ENCODE measurements at regions of chr3 and their contacts with region 1.

Region 1: DNA sequence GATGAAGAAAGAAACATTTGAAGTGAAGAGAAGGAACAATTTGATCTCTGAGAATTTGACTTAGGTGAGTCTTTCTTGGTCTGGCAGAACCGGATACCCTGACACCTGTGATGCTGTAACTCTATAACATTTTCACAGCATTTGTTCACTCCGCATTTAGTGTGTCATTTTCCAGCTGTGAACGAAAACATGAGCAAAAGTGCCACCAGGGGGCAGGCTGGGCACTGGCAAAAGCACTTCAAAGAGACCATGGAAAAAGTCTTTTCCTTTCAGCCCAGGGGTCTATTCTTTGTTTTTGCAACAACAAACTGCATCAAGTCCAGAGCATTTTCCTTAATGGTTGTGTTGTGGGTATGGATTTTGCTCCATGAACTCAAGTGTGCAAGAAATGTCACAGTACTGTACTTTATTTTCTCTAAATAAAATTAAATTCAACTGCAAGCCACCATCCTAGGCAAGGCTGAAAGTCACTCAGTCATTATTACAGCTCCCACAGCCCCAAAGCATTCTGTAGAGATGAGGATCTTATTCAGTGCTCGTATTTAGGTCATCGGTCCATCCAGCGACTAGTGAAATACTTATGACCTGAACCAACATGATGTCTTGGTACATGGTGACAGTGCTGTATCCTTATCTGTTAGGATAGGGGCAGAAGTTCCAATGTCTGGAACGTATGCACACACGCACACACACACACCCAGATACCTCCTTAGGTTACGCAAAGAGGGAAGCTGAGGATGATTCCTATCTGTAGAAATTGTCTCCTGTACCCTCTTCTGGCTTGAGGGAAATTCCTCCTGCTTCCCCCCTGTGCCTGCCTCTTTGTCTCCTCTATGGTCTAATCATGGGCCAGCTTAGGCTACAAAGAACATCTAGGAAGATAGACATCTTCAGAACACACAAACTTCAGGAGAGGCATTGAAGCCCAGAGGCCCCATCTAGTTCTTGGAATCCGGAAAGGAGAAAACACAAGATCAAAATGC is 125.5 kb downstream of the GADL1 start:
- DNase-seq: peak; percentile 39 to 69 (median 62)
- ATAC-seq: peak; percentile 48
- H3K4me3 ChIP-seq: no peak overlapping the region
- H3K4me3 Mint-ChIP-seq: peak overlapping the region in 1 of 10 donors; percentile 35
- H3K27ac ChIP-seq: no peak overlapping the region
- H3K27ac Mint-ChIP-seq: no peak overlapping the region
- H3K4me1 ChIP-seq: no peaks in the 10 kb centered on the region
- H3K4me1 Mint-ChIP-seq: peaks cover 0 to 7% (median 0%) of the 10 kb centered on the region in 7 donors
- H3K27me3 ChIP-seq: no peaks in the 10 kb centered on the region
- H3K27me3 Mint-ChIP-seq: peaks cover 0 to 32% (median 3%) of the 10 kb centered on the region in 5 donors

Region 2: DNA sequence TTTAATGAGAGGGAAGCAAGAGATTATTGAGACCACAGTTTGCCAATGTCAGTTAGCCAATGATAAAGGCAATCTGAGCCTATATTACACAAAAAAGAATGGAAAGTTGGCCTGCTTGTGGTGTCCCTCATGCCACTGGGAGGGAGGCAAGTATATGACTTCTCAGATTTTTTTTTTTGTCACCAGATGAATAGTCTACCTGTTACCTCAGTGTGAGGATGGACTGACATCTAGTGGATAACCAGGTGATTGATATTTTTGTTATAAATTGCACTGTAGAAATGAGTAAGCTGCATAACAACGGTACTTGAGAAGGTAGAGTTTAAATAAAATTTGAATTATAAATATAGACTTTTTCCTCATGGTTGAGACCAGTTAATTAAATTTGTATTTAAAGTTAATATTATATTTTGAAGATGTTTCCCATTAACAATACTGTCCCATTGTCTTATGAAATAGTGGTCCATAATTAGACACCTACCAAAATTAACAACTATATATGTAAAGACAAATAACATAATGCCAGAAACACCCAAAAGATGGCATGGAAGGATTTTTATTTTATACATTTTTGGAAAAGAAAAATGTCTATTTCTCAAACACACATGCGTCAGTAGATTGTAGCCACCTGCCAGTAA is 363.3 kb after region 1 on chr3:
- CTCF ChIA-PET with region 1: no interaction called
- POLR2A ChIA-PET with region 1: no interaction called
- intact Hi-C with region 1: loop called (anchors 1 kb)
- DNase-seq: peak in 6 of 9 donors; percentile 2 to 55 (median 39)
- ATAC-seq: peak; percentile 58
- H3K4me3 ChIP-seq: no peak overlapping the region
- H3K4me3 Mint-ChIP-seq: no peak overlapping the region
- H3K27ac ChIP-seq: no peak overlapping the region
- H3K27ac Mint-ChIP-seq: no peak overlapping the region
- H3K4me1 ChIP-seq: no peaks in the 10 kb centered on the region
- H3K4me1 Mint-ChIP-seq: peaks cover 0 to 18% (median 0%) of the 10 kb centered on the region in 7 donors
- H3K27me3 ChIP-seq: no peaks in the 10 kb centered on the region
- H3K27me3 Mint-ChIP-seq: no peaks in the 10 kb centered on the region

Region 3: GRCh38 chr3:31361371-31362273 is 592.6 kb after region 1 on chr3:
- CTCF ChIA-PET with region 1: no interaction called
- POLR2A ChIA-PET with region 1: no interaction called
- intact Hi-C with region 1: no loop called
- DNase-seq: no peak
- ATAC-seq: no peak
- H3K4me3 ChIP-seq: no peak overlapping the region
- H3K4me3 Mint-ChIP-seq: no peak overlapping the region
- H3K27ac ChIP-seq: no peak overlapping the region
- H3K27ac Mint-ChIP-seq: no peak overlapping the region
- H3K4me1 ChIP-seq: no peaks in the 10 kb centered on the region
- H3K4me1 Mint-ChIP-seq: peaks cover 26 to 44% (median 38%) of the 10 kb centered on the region in 7 donors
- H3K27me3 ChIP-seq: no peaks in the 10 kb centered on the region
- H3K27me3 Mint-ChIP-seq: no peaks in the 10 kb centered on the region

Region 4: GRCh38 chr3:31550452-31551251 is 781.7 kb after region 1 on chr3:
- CTCF ChIA-PET with region 1: no interaction called
- POLR2A ChIA-PET with region 1: no interaction called
- intact Hi-C with region 1: loop called in 1 of 2 experiments (anchors 5 kb)
- DNase-seq: peak in 5 of 9 donors; percentile 21 to 47 (median 29)
- ATAC-seq: peak; percentile 79
- H3K4me3 ChIP-seq: no peak overlapping the region
- H3K4me3 Mint-ChIP-seq: peak overlapping the region; percentile 0 to 69 (median 34)
- H3K27ac ChIP-seq: peak overlapping the region; percentile 1
- H3K27ac Mint-ChIP-seq: peak overlapping the region in 8 of 9 donors; percentile 19 to 79 (median 48)
- H3K4me1 ChIP-seq: peaks cover 20 to 40% of the 10 kb centered on the region in 2 donors
- H3K4me1 Mint-ChIP-seq: peaks cover 65 to 94% (median 92%) of the 10 kb centered on the region in 7 donors
- H3K27me3 ChIP-seq: no peaks in the 10 kb centered on the region
- H3K27me3 Mint-ChIP-seq: no peaks in the 10 kb centered on the region

Region 5: DNA sequence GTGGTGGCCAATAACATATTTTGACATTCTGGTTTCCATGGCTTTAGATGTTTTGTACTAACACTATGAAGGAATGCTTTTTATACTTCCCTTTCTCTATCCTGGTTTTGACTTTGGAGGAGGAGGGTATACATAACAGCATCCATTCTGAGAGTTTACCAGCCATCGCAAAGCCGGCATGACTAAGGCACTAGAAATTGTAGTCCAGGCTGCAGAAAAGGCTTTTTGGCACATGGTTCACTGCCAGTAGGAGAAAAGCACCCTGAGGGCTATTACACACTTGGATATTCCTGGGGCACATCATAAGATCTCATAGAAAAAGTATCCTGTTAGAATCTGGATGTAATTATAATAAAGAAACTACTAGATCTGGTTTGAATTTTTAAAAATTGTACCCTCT is 865.5 kb after region 1 on chr3:
- CTCF ChIA-PET with region 1: no interaction called
- POLR2A ChIA-PET with region 1: no interaction called
- intact Hi-C with region 1: loop called in 1 of 2 experiments (anchors 1 kb)
- DNase-seq: no peak
- ATAC-seq: no peak
- H3K4me3 ChIP-seq: no peak overlapping the region
- H3K4me3 Mint-ChIP-seq: no peak overlapping the region
- H3K27ac ChIP-seq: no peak overlapping the region
- H3K27ac Mint-ChIP-seq: peak overlapping the region in 8 of 9 donors; percentile 28 to 86 (median 62)
- H3K4me1 ChIP-seq: peaks cover 10 to 28% of the 10 kb centered on the region in 2 donors
- H3K4me1 Mint-ChIP-seq: peaks cover 17 to 72% (median 61%) of the 10 kb centered on the region in 7 donors
- H3K27me3 ChIP-seq: no peaks in the 10 kb centered on the region
- H3K27me3 Mint-ChIP-seq: no peaks in the 10 kb centered on the region

Region 6: GRCh38 chr3:31768479-31769123 is 999.6 kb after region 1 on chr3:
- CTCF ChIA-PET with region 1: interaction called, 12 read pairs
- POLR2A ChIA-PET with region 1: no interaction called
- intact Hi-C with region 1: loop called (anchors 1 kb)
- DNase-seq: peak; percentile 8 to 59 (median 43)
- ATAC-seq: peak; percentile 46
- H3K4me3 ChIP-seq: no peak overlapping the region
- H3K4me3 Mint-ChIP-seq: peak overlapping the region in 1 of 10 donors; percentile 19
- H3K27ac ChIP-seq: no peak overlapping the region
- H3K27ac Mint-ChIP-seq: peak overlapping the region in 1 of 9 donors; percentile 21
- H3K4me1 ChIP-seq: no peaks in the 10 kb centered on the region
- H3K4me1 Mint-ChIP-seq: peaks cover 2 to 53% (median 4%) of the 10 kb centered on the region in 7 donors
- H3K27me3 ChIP-seq: no peaks in the 10 kb centered on the region
- H3K27me3 Mint-ChIP-seq: no peaks in the 10 kb centered on the region

Region 7: DNA sequence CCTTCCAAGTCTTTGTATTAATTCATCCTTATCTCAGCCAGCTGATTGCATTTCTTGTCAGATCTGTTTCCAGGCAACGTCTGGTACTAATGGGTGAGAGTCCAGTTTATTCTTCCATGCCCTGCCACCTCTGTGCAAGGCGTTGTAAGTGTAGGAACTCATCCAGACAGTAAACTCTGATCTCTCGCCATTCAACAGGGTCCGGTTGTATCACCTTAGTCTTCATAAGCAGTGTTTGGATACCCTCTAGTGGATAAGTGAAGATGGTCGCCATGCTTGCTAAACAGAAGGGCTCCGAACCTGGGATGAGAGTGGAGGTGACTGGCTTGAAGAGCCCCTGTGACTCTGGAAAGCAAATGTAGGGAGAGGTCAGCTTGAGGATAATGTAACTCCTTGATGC is 1571.0 kb after region 1 on chr3:
- CTCF ChIA-PET with region 1: no interaction called
- POLR2A ChIA-PET with region 1: no interaction called
- intact Hi-C with region 1: loop called in 1 of 2 experiments (anchors 5 kb)
- DNase-seq: peak in 7 of 9 donors; percentile 31 to 65 (median 56)
- ATAC-seq: peak; percentile 77
- H3K4me3 ChIP-seq: no peak overlapping the region
- H3K4me3 Mint-ChIP-seq: no peak overlapping the region
- H3K27ac ChIP-seq: no peak overlapping the region
- H3K27ac Mint-ChIP-seq: no peak overlapping the region
- H3K4me1 ChIP-seq: peaks cover 0 to 18% of the 10 kb centered on the region in 2 donors
- H3K4me1 Mint-ChIP-seq: peaks cover 18 to 30% (median 27%) of the 10 kb centered on the region in 7 donors
- H3K27me3 ChIP-seq: no peaks in the 10 kb centered on the region
- H3K27me3 Mint-ChIP-seq: no peaks in the 10 kb centered on the region

Measured in naive thymus-derived CD4-positive, alpha-beta T cell (primary cell).